AG04450 (cell line): ENCODE measurements at regions of chr2 and their contacts with region 1.

Region 1: GRCh38 chr2:18209919-18210639 is 331.6 kb downstream of the KCNS3 start:
- DNase-seq: peak; percentile 55
- H3K4me3 ChIP-seq: no peak overlapping the region
- H3K27ac ChIP-seq: peak overlapping the region; percentile 21
- H3K27me3 ChIP-seq: no peaks in the 10 kb centered on the region
- CTCF ChIP-seq: no peak

Region 2: DNA sequence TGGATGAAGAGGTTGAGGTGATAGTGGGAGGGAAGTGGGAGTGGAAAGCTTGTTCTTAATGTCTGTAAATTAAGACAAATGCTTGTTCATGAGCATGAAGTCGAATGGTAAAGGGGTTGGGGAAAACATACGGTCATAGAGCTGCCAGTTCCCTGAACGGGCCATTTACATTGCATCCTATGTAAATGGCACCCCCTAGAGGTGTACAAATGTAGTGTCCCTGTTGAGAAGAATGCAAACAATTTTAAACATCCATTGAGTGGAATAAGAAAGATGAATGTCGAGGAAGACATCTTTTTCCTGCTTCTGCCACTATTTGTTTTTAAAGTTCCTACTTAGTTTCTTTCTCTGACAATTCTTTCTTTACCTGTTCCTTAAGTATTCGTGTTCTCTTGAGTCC is 194.6 kb after region 1 on chr2:
- CTCF ChIA-PET with region 1: interaction called, 10 read pairs
- POLR2A ChIA-PET with region 1: no interaction called
- DNase-seq: no peak
- H3K4me3 ChIP-seq: no peak overlapping the region
- H3K27ac ChIP-seq: no peak overlapping the region
- H3K27me3 ChIP-seq: no peaks in the 10 kb centered on the region
- CTCF ChIP-seq: peak; percentile 36; the same call in 1 of the 2 replicates